OCI-LY7 (cell line): ENCODE measurements at regions of chr2 and their contacts with region 1.

Region 1: DNA sequence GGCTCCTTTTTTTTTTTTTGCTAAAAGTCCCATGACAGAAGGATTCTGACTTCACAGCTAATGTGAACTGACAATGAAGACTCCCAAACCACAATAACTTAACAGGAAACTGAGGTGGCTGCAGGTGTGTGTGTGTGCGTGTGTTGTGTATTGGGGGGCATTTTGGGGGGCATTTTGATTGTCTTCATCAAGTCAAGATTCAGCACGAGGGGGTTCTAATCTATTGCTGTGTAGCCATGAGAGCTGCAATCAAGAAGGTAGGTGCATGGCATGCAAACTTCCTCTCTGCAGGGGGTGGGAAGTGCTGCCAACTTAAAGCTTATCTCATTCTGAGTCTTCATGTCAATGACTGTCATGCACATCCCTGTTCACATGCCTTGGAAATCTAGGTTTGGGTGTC is 25.2 kb downstream of the SPRED2 start:
- DNase-seq: no peak
- H3K4me3 ChIP-seq: peak overlapping the region; percentile 32
- H3K27ac ChIP-seq: peak overlapping the region; percentile 68
- H3K4me1 ChIP-seq: peaks cover 98% of the 10 kb centered on the region
- CTCF ChIP-seq: no peak

Region 2: GRCh38 chr2:65366595-65367125 is 40.6 kb before region 1 on chr2:
- CTCF ChIA-PET with region 1: no interaction called
- POLR2A ChIA-PET with region 1: interaction called, 12 read pairs
- intact Hi-C with region 1: no loop called
- DNase-seq: peak; percentile 71
- H3K4me3 ChIP-seq: peak overlapping the region; percentile 68
- H3K27ac ChIP-seq: peak overlapping the region; percentile 85
- H3K4me1 ChIP-seq: peaks cover 95% of the 10 kb centered on the region
- CTCF ChIP-seq: no peak

Region 3: DNA sequence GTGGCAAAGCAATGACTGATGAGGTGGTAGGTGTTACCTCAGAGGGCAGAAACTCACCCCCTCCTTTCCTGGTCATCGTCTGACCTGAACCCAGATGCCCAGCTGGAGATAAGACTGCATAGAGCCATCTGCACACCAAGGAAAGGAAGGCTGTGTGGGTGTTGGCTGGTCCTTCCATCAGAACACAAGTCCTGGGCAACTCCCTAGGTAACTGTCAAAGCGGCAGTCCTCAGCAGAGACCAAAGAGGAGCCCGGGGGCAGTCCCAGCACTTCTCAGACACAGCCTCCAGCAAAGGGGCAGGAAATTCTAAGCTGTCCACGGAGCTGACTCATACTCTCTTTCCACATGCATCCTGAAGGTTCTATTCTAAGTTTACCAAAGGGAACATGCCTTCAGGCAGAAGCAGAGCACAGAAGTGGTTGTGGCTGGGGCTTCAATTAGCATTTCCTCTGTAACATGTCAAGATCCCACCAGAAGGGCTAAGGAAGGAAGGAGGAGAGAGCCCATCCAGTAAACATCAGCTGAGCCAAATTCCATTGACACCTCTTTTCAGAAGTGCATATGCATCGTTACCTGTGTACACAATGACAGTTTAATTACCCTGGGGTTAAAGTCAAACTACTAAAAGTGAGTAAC is 29.6 kb before region 1 on chr2:
- CTCF ChIA-PET with region 1: interaction called, 12 read pairs
- POLR2A ChIA-PET with region 1: interaction called, 19 read pairs
- intact Hi-C with region 1: no loop called
- DNase-seq: no peak
- H3K4me3 ChIP-seq: no peak overlapping the region
- H3K27ac ChIP-seq: no peak overlapping the region
- H3K4me1 ChIP-seq: peaks cover 74% of the 10 kb centered on the region
- CTCF ChIP-seq: no peak

Region 4: GRCh38 chr2:65382776-65383357 is 24.4 kb before region 1 on chr2:
- CTCF ChIA-PET with region 1: interaction called, 12 read pairs
- POLR2A ChIA-PET with region 1: interaction called, 6 read pairs
- intact Hi-C with region 1: no loop called
- DNase-seq: peak; percentile 85
- H3K4me3 ChIP-seq: peak overlapping the region; percentile 51
- H3K27ac ChIP-seq: peak overlapping the region; percentile 89
- H3K4me1 ChIP-seq: peaks cover 87% of the 10 kb centered on the region
- CTCF ChIP-seq: peak; percentile 82

Region 5: DNA sequence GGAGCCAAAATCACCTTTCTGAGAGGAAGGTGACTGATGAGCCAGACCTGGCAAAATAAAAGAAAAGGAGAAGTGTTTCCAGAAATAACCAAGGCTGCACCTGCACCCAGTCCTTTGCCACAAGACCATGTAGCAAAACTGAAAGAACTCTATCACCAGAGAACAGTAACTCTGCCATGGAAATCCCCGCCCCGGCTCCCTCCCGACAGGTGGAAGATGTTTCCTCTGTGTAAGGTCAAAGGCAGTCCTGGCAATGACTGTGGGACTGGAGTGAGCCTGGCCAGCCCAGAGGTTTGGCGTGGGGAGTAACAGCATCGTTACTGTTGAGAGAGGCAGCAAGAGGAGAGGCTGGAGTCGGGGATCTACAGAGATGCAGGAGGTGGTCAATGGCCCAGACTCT is 17.1 kb before region 1 on chr2:
- CTCF ChIA-PET with region 1: interaction called, 7 read pairs
- POLR2A ChIA-PET with region 1: interaction called, 21 read pairs
- intact Hi-C with region 1: no loop called
- DNase-seq: peak; percentile 89
- H3K4me3 ChIP-seq: peak overlapping the region; percentile 60
- H3K27ac ChIP-seq: peak overlapping the region; percentile 96
- H3K4me1 ChIP-seq: peaks cover 99% of the 10 kb centered on the region
- CTCF ChIP-seq: no peak

Region 6: GRCh38 chr2:65396348-65397026 is 10.8 kb before region 1 on chr2:
- CTCF ChIA-PET with region 1: interaction called, 7 read pairs
- POLR2A ChIA-PET with region 1: interaction called, 21 read pairs
- intact Hi-C with region 1: no loop called
- DNase-seq: peak; percentile 57
- H3K4me3 ChIP-seq: peak overlapping the region; percentile 55
- H3K27ac ChIP-seq: peak overlapping the region; percentile 96
- H3K4me1 ChIP-seq: peaks cover 79% of the 10 kb centered on the region
- CTCF ChIP-seq: no peak

Region 7: GRCh38 chr2:65420712-65421431 is 13.6 kb after region 1 on chr2:
- CTCF ChIA-PET with region 1: interaction called, 6 read pairs
- POLR2A ChIA-PET with region 1: interaction called, 45 read pairs
- intact Hi-C with region 1: no loop called
- DNase-seq: peak; percentile 83
- H3K4me3 ChIP-seq: peak overlapping the region; percentile 47
- H3K27ac ChIP-seq: peak overlapping the region; percentile 75
- H3K4me1 ChIP-seq: peaks cover 74% of the 10 kb centered on the region
- CTCF ChIP-seq: no peak